ENCODE measurements at regions of chr12 and their contacts with region 1.

Region 1: GRCh38 chr12:19181666-19182426 is 52.3 kb downstream of the PLEKHA5 start:
- DNase-seq: no peak
- H3K4me3 ChIP-seq: no peak overlapping the region
- H3K27ac ChIP-seq: no peak overlapping the region
- H3K4me1 ChIP-seq: peaks cover 0 to 18% (median 2%) of the 10 kb centered on the region in 4 donors
- H3K27me3 ChIP-seq: no peaks in the 10 kb centered on the region
- CTCF ChIP-seq: peak in 1 of 2 experiments; percentile 16

Region 2: GRCh38 chr12:18246063-18246462 is 935.8 kb before region 1 on chr12:
- intact Hi-C with region 1: loop called (anchors 10 kb)
- DNase-seq: no peak
- H3K4me3 ChIP-seq: no peak overlapping the region
- H3K27ac ChIP-seq: no peak overlapping the region
- H3K4me1 ChIP-seq: no peaks in the 10 kb centered on the region
- H3K27me3 ChIP-seq: no peaks in the 10 kb centered on the region
- CTCF ChIP-seq: no peak

Region 3: GRCh38 chr12:19066475-19067001 is 115.3 kb before region 1 on chr12:
- intact Hi-C with region 1: no loop called
- DNase-seq: no peak
- H3K4me3 ChIP-seq: no peak overlapping the region
- H3K27ac ChIP-seq: no peak overlapping the region
- H3K4me1 ChIP-seq: no peaks in the 10 kb centered on the region
- H3K27me3 ChIP-seq: no peaks in the 10 kb centered on the region
- CTCF ChIP-seq: no peak

Region 4: DNA sequence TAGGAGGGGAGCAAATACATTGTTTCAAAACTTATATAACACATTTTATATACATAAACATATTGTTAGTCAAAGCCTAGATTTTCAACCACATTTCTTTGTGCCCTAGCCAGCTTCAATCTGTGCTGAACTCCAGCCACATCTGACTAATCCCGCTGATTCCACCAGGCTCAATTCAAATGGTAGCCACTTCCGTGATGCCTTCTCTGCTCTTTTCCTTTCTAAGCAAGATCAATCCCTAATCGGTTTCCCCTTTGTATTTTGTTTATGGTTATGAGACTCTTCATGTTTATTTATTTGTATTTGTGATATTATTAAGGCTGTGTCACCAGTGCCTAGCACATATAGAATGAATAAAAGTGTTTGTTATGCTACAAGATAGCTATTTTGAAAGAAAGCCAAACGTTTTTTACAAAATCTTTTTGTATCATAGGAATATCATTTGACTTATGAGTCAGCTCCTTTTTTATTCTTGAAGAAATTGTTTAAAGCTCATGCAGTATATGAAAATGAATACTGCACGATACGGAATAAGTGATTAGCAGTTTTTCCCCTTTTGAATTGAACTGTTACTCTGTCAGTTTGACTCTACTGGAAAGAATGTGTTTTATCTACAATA is 57.9 kb after region 1 on chr12:
- intact Hi-C with region 1: no loop called
- DNase-seq: no peak
- H3K4me3 ChIP-seq: no peak overlapping the region
- H3K27ac ChIP-seq: no peak overlapping the region
- H3K4me1 ChIP-seq: peaks cover 0 to 94% (median 21%) of the 10 kb centered on the region in 4 donors
- H3K27me3 ChIP-seq: no peaks in the 10 kb centered on the region
- CTCF ChIP-seq: no peak

Region 5: DNA sequence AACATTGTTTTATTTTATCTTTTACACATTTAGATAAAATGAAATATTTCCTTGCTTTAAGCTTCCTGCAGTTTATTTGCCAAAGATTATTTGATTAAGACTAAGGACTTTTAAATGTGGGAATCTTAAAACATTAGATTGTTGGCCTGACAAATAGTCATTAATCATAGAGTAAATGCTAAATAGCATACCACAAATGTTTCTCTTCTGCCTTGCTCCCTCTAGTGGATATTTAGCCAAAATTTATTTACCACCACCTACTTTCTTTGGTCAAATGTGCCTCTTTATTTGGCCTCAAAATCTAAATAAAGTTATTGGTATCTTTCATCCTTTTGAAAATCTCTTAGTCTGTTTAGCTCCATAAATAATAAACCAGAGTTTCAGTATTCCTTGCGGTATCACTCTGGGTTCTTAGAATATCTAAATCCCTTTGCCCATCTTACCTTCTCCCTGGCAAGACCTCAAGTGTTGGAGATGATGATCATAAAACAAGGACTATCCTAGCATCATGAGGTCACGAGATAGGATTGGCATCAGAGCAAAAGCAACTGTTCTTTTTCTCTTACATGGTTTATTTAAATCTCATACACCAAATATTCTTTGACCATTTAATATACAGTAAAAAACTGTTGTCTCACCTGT is 106.9 kb after region 1 on chr12:
- intact Hi-C with region 1: loop called (anchors 5 kb)
- DNase-seq: no peak
- H3K4me3 ChIP-seq: no peak overlapping the region
- H3K27ac ChIP-seq: no peak overlapping the region
- H3K4me1 ChIP-seq: peaks cover 0 to 4% (median 2%) of the 10 kb centered on the region in 4 donors
- H3K27me3 ChIP-seq: no peaks in the 10 kb centered on the region
- CTCF ChIP-seq: peak; percentile 56 to 67

Region 6: GRCh38 chr12:19421503-19422282 is 239.8 kb after region 1 on chr12:
- intact Hi-C with region 1: no loop called
- DNase-seq: no peak
- H3K4me3 ChIP-seq: no peak overlapping the region
- H3K27ac ChIP-seq: no peak overlapping the region
- H3K4me1 ChIP-seq: no peaks in the 10 kb centered on the region
- H3K27me3 ChIP-seq: no peaks in the 10 kb centered on the region
- CTCF ChIP-seq: no peak